Mammary epithelial cell (primary cell): ENCODE measurements at regions of chr15 and their contacts with region 1.

Region 1: GRCh38 chr15:78077058-78077877 is at the start of gene TBC1D2B:
- DNase-seq: peak; percentile 55
- H3K4me3 ChIP-seq: peak within 1 kb of the TSS; percentile 62 to 82 (median 78)
- H3K27ac ChIP-seq: no peak within 1 kb of the TSS
- H3K4me1 ChIP-seq: peaks cover 11% of the 10 kb centered on the region
- H3K27me3 ChIP-seq: no peaks in the 10 kb centered on the region
- CTCF ChIP-seq: no peak
- total RNA-seq, gene TBC1D2B: 15.7 to 24.0 TPM

Region 2: GRCh38 chr15:77992356-77993222 is 84.7 kb before region 1 on chr15:
- CTCF ChIA-PET with region 1: no interaction called
- dilution Hi-C with region 1: no loop called
- in situ Hi-C with region 1: no loop called
- intact Hi-C with region 1: loop called (anchors 5 kb)
- DNase-seq: no peak
- H3K4me3 ChIP-seq: no peak overlapping the region
- H3K27ac ChIP-seq: no peak overlapping the region
- H3K4me1 ChIP-seq: peaks cover 36% of the 10 kb centered on the region
- H3K27me3 ChIP-seq: no peaks in the 10 kb centered on the region
- CTCF ChIP-seq: no peak

Region 3: DNA sequence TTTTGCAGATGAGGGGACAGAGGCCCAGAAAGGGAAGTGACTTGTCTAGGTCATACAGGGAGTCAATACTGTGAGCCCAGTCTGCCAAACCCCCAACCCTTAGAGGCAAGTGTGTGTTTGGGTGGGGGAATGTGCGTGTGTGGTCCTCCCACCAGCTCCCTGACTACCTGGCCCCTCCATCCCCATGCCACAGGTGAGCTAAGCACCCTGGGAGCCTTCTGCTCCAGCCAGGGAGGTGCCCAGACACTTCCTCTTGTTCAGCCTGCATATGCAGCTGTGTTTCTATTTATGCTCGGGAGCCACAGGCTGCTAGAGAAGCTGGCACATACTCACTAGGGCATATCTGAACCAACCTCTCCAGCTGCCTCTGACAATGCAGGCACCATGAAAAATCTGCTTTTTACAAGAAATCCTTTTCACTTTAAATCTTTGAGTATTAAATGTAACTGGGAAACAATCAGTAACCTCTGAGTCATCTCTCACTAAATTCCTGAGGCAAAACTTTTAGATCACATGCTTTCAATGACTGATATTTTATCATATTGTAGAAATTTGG is 20.5 kb before region 1 on chr15:
- CTCF ChIA-PET with region 1: no interaction called
- dilution Hi-C with region 1: no loop called
- in situ Hi-C with region 1: no loop called
- intact Hi-C with region 1: loop called (anchors 2 kb)
- DNase-seq: peak; percentile 51
- H3K4me3 ChIP-seq: no peak overlapping the region
- H3K27ac ChIP-seq: peak overlapping the region; percentile 53
- H3K4me1 ChIP-seq: peaks cover 21% of the 10 kb centered on the region
- H3K27me3 ChIP-seq: no peaks in the 10 kb centered on the region
- CTCF ChIP-seq: no peak

Region 4: GRCh38 chr15:78457101-78457500 is 379.8 kb after region 1 on chr15:
- CTCF ChIA-PET with region 1: no interaction called
- dilution Hi-C with region 1: no loop called
- in situ Hi-C with region 1: no loop called
- intact Hi-C with region 1: no loop called
- DNase-seq: peak; percentile 20
- H3K4me3 ChIP-seq: no peak overlapping the region
- H3K27ac ChIP-seq: no peak overlapping the region
- H3K4me1 ChIP-seq: no peaks in the 10 kb centered on the region
- H3K27me3 ChIP-seq: no peaks in the 10 kb centered on the region
- CTCF ChIP-seq: no peak